CD4-positive, alpha-beta memory T cell (primary cell): ENCODE measurements at regions of chr7 and their contacts with region 1.

Region 1: DNA sequence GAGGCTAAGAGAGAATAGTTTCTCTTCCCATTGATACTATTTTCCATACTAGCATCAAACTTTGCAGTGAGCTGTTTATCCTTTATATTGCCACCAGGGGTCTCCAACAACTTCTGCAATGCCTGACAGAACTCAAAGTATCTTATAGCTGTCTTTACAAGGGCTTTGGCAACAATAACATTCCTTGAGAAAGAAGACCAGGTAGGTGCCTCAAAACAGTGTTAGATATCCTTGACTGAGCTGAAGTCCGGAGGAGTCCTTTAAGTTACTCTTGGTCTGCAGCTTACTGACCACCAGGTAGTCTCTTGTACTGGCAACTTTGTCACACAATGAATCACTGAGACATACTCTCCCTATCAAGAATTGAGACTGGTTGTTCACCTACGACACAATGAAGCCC is 30.0 kb upstream of the TES start:
- DNase-seq: peak; percentile 55 to 67 (median 63)
- H3K4me3 ChIP-seq: no peak overlapping the region
- H3K4me3 Mint-ChIP-seq: no peak overlapping the region
- H3K27ac ChIP-seq: no peak overlapping the region
- H3K27ac Mint-ChIP-seq: peak overlapping the region in 1 of 7 donors; percentile 53
- H3K4me1 ChIP-seq: no peaks in the 10 kb centered on the region
- H3K4me1 Mint-ChIP-seq: peaks cover 0 to 4% (median 4%) of the 10 kb centered on the region in 4 donors
- H3K27me3 ChIP-seq: no peaks in the 10 kb centered on the region
- H3K27me3 Mint-ChIP-seq: peaks cover 0 to 6% of the 10 kb centered on the region in 2 donors

Region 2: GRCh38 chr7:115603416-115603815 is 576.9 kb before region 1 on chr7:
- CTCF ChIA-PET with region 1: no interaction called
- POLR2A ChIA-PET with region 1: no interaction called
- intact Hi-C with region 1: no loop called
- DNase-seq: no peak
- H3K4me3 ChIP-seq: no peak overlapping the region
- H3K4me3 Mint-ChIP-seq: no peak overlapping the region
- H3K27ac ChIP-seq: no peak overlapping the region
- H3K27ac Mint-ChIP-seq: no peak overlapping the region
- H3K4me1 ChIP-seq: no peaks in the 10 kb centered on the region
- H3K4me1 Mint-ChIP-seq: peaks cover 0 to 1% (median 0%) of the 10 kb centered on the region in 4 donors
- H3K27me3 ChIP-seq: no peaks in the 10 kb centered on the region
- H3K27me3 Mint-ChIP-seq: peaks cover 0 to 1% of the 10 kb centered on the region in 2 donors

Region 3: DNA sequence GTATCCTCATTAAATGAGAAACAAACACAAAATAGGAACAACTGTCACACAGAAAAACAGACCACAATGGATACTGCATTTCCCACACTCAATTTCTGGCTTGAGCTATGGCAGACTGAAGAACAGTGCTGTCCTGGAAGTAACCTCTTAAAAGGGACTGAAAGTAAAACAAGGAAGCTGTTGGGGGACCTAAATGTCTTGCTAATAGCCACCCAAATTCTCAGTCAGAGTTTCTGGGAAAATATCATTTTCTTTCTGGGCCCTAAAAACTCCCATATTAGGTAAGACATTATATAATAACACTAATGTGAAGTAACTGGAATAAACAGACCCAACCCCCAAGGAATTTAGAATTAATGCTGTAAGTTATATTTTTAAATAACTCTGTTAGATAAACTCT is 68.8 kb before region 1 on chr7:
- CTCF ChIA-PET with region 1: no interaction called
- POLR2A ChIA-PET with region 1: no interaction called
- intact Hi-C with region 1: no loop called
- DNase-seq: no peak
- H3K4me3 ChIP-seq: no peak overlapping the region
- H3K4me3 Mint-ChIP-seq: no peak overlapping the region
- H3K27ac ChIP-seq: no peak overlapping the region
- H3K27ac Mint-ChIP-seq: no peak overlapping the region
- H3K4me1 ChIP-seq: no peaks in the 10 kb centered on the region
- H3K4me1 Mint-ChIP-seq: no peaks in the 10 kb centered on the region
- H3K27me3 ChIP-seq: no peaks in the 10 kb centered on the region
- H3K27me3 Mint-ChIP-seq: peaks cover 2 to 3% of the 10 kb centered on the region in 2 donors

Region 4: DNA sequence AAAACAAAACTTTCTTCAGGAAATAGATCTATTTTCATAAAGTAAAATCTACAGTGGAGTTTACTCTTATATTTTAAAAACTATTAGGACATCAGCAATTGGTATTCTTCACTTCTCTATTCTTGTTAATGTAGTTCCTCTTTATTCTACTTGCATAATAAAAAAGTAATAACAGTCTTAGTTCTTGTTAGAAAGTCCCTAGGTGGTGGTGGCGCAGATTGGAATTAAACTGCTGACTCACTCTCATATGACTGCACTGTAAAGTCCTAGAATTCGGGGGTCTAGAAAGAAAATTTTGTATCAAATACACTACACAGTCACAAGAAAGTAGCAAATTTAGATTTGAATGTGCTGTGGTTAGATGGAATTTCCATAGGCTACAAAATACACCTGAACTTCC is 14.6 kb before region 1 on chr7:
- CTCF ChIA-PET with region 1: interaction called, 15 read pairs
- POLR2A ChIA-PET with region 1: no interaction called
- intact Hi-C with region 1: no loop called
- DNase-seq: no peak
- H3K4me3 ChIP-seq: no peak overlapping the region
- H3K4me3 Mint-ChIP-seq: no peak overlapping the region
- H3K27ac ChIP-seq: no peak overlapping the region
- H3K27ac Mint-ChIP-seq: no peak overlapping the region
- H3K4me1 ChIP-seq: peaks cover 6% of the 10 kb centered on the region
- H3K4me1 Mint-ChIP-seq: peaks cover 4 to 8% (median 5%) of the 10 kb centered on the region in 4 donors
- H3K27me3 ChIP-seq: no peaks in the 10 kb centered on the region
- H3K27me3 Mint-ChIP-seq: peaks cover 11 to 15% of the 10 kb centered on the region in 2 donors

Region 5: GRCh38 chr7:116206141-116206540 is 25.8 kb after region 1 on chr7:
- CTCF ChIA-PET with region 1: interaction called, 55 read pairs
- POLR2A ChIA-PET with region 1: interaction called, 39 read pairs
- intact Hi-C with region 1: loop called (anchors 1 kb)
- DNase-seq: no peak
- H3K4me3 ChIP-seq: no peak overlapping the region
- H3K4me3 Mint-ChIP-seq: no peak overlapping the region
- H3K27ac ChIP-seq: no peak overlapping the region
- H3K27ac Mint-ChIP-seq: no peak overlapping the region
- H3K4me1 ChIP-seq: peaks cover 11% of the 10 kb centered on the region
- H3K4me1 Mint-ChIP-seq: peaks cover 12 to 14% (median 12%) of the 10 kb centered on the region in 4 donors
- H3K27me3 ChIP-seq: no peaks in the 10 kb centered on the region
- H3K27me3 Mint-ChIP-seq: no peaks in the 10 kb centered on the region

Region 6: GRCh38 chr7:116218051-116218645 is 37.8 kb after region 1 on chr7:
- CTCF ChIA-PET with region 1: interaction called, 26 read pairs
- POLR2A ChIA-PET with region 1: no interaction called
- intact Hi-C with region 1: no loop called
- DNase-seq: no peak
- H3K4me3 ChIP-seq: no peak overlapping the region
- H3K4me3 Mint-ChIP-seq: peak overlapping the region in 7 of 8 donors; percentile 0 to 75 (median 51)
- H3K27ac ChIP-seq: no peak overlapping the region
- H3K27ac Mint-ChIP-seq: peak overlapping the region; percentile 14 to 86 (median 79)
- H3K4me1 ChIP-seq: peaks cover 98% of the 10 kb centered on the region
- H3K4me1 Mint-ChIP-seq: peaks cover 74 to 96% (median 82%) of the 10 kb centered on the region in 4 donors
- H3K27me3 ChIP-seq: no peaks in the 10 kb centered on the region
- H3K27me3 Mint-ChIP-seq: no peaks in the 10 kb centered on the region

Region 7: GRCh38 chr7:116242178-116242577 is 61.9 kb after region 1 on chr7:
- CTCF ChIA-PET with region 1: interaction called, 409 read pairs
- POLR2A ChIA-PET with region 1: interaction called, 20 read pairs
- intact Hi-C with region 1: no loop called
- DNase-seq: no peak
- H3K4me3 ChIP-seq: no peak overlapping the region
- H3K4me3 Mint-ChIP-seq: no peak overlapping the region
- H3K27ac ChIP-seq: no peak overlapping the region
- H3K27ac Mint-ChIP-seq: peak overlapping the region in 1 of 7 donors; percentile 26
- H3K4me1 ChIP-seq: peaks cover 3% of the 10 kb centered on the region
- H3K4me1 Mint-ChIP-seq: peaks cover 46 to 67% (median 56%) of the 10 kb centered on the region in 4 donors
- H3K27me3 ChIP-seq: no peaks in the 10 kb centered on the region
- H3K27me3 Mint-ChIP-seq: no peaks in the 10 kb centered on the region

Region 8: GRCh38 chr7:116258734-116259133 is 78.4 kb after region 1 on chr7:
- CTCF ChIA-PET with region 1: interaction called, 13 read pairs
- POLR2A ChIA-PET with region 1: interaction called, 3 read pairs
- intact Hi-C with region 1: no loop called
- DNase-seq: peak in 4 of 5 donors; percentile 31 to 51 (median 40)
- H3K4me3 ChIP-seq: no peak overlapping the region
- H3K4me3 Mint-ChIP-seq: no peak overlapping the region
- H3K27ac ChIP-seq: no peak overlapping the region
- H3K27ac Mint-ChIP-seq: peak overlapping the region in 5 of 7 donors; percentile 2 to 72 (median 58)
- H3K4me1 ChIP-seq: no peaks in the 10 kb centered on the region
- H3K4me1 Mint-ChIP-seq: peaks cover 2 to 11% (median 7%) of the 10 kb centered on the region in 4 donors
- H3K27me3 ChIP-seq: no peaks in the 10 kb centered on the region
- H3K27me3 Mint-ChIP-seq: no peaks in the 10 kb centered on the region

Region 9: DNA sequence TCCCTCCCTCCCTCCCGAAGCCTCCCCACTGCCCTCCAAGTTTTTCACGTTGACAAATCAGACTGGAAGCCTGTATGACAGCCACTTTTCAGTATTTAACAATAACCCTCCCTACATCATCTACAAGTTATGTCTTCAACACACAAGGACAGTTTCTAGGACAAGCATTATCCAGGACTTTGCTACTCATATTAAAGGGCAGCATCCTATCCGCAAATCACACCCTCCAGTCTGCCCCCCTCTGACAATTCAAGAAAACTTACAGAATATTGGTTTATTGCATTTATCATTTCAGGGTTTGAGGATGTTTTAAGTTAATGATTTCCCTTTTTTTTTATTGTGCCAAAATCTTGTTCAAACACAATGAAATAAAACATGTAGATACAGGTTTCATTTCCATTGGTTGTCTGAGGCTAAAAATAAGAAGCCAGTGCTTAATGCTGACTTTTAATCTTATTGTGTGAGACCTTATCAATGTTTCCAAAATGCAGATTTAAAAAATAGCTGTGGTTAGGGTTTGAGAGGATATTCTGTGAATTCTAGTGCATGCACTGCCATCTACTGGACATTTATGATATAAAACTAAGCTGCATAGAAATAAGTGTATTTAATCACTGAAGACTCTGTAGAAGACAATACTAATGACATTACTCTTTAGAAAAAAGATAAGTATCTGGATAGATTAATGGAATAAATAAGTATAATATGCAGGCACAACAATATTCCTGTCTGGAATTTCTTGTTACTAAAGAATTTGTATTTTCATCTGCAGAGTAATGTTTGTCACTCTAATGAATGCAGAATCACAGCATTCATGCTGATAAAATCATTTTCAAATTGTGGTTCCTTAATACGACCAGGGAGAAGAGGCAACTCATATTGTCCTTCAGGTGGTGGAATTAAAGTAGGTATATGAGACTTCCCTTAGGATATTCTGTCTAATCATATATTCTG is 408.6 kb after region 1 on chr7:
- CTCF ChIA-PET with region 1: interaction called, 31 read pairs
- POLR2A ChIA-PET with region 1: no interaction called
- intact Hi-C with region 1: no loop called
- DNase-seq: peak in 4 of 5 donors; percentile 17 to 38 (median 32)
- H3K4me3 ChIP-seq: no peak overlapping the region
- H3K4me3 Mint-ChIP-seq: no peak overlapping the region
- H3K27ac ChIP-seq: no peak overlapping the region
- H3K27ac Mint-ChIP-seq: no peak overlapping the region
- H3K4me1 ChIP-seq: peaks cover 6% of the 10 kb centered on the region
- H3K4me1 Mint-ChIP-seq: peaks cover 10 to 22% (median 16%) of the 10 kb centered on the region in 4 donors
- H3K27me3 ChIP-seq: peaks cover 9% of the 10 kb centered on the region
- H3K27me3 Mint-ChIP-seq: peaks cover 17 to 22% of the 10 kb centered on the region in 2 donors